ENCODE measurements at regions of chr5 and their contacts with region 1.

Region 1: DNA sequence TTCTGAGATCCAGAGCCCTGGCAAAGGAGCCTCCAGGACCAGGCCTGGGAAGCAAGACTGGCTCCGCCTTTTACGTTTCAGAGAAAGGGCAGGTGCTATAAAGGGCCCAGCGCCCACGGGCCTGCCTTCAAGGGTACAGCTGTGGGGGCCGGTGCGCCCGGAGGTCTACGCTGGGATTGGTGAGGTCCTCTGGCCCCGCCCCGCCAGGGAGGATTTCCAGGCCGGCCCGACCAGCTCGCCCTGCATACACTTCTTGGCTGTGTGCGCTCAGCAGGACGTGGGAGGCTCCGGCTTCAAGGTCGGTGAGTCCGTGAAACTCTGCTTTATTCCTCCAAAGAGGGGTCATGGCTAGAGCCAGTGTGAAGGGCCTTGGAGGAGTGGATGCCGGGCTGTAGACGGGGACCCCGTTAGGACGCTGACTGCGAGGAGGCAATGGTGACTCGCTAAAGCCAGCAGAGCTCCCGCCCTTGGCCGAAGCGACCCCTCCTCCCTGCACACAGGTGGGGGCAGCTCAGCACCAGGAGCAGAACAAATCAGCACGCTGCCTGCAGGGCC is at the start of gene CKMT2:
- DNase-seq: peak; percentile 81
- ATAC-seq: peak; percentile 91 to 95
- H3K4me3 ChIP-seq: peak within 1 kb of the TSS; percentile 47
- H3K27ac ChIP-seq: peak within 1 kb of the TSS; percentile 11
- H3K4me1 ChIP-seq: peaks cover 29% of the 10 kb centered on the region
- H3K27me3 ChIP-seq: no peaks in the 10 kb centered on the region
- CTCF ChIP-seq: no peak
- total RNA-seq, gene CKMT2: 1.4 TPM

Region 2: GRCh38 chr5:81292130-81292529 is 59.0 kb after region 1 on chr5:
- intact Hi-C with region 1: loop called (anchors 5 kb)
- DNase-seq: no peak
- ATAC-seq: no peak
- H3K4me3 ChIP-seq: no peak overlapping the region
- H3K27ac ChIP-seq: no peak overlapping the region
- H3K4me1 ChIP-seq: no peaks in the 10 kb centered on the region
- H3K27me3 ChIP-seq: no peaks in the 10 kb centered on the region
- CTCF ChIP-seq: no peak

Region 3: GRCh38 chr5:81420039-81420667 is 187.0 kb after region 1 on chr5:
- intact Hi-C with region 1: no loop called
- DNase-seq: no peak
- ATAC-seq: no peak
- H3K4me3 ChIP-seq: no peak overlapping the region
- H3K27ac ChIP-seq: no peak overlapping the region
- H3K4me1 ChIP-seq: no peaks in the 10 kb centered on the region
- H3K27me3 ChIP-seq: no peaks in the 10 kb centered on the region
- CTCF ChIP-seq: no peak

Measured in lower lobe of right lung (tissue), 2 donors.